ENCODE measurements at regions of chr19 and their contacts with region 1.

Region 1: DNA sequence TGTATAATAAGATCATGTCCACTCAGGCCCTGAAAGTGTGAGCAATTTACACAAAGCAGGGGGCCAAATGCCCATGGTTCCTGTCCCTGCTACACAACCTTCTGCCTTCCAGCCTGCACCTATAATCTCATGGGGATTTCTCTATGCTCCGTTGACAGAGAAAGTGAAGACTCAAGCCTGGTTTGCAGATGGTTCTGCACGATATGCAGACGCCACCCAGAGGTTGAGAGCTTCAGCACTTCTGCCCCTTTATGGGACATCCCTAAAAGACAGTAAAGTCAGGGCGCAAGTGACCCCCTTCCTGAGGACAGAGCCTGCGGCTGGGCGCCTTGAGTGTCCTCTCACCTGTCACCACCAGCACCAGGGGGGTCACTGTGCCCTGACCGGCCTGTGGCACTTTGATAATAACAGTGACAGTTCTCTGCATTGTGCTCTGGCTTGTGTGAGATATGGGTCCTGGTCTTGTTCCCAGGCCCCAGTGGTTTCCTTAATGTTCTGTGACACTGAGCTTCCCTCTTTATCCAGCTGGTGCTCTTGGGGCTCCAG is 15.1 kb downstream of the LILRA5 start:
- DNase-seq: no peak
- ATAC-seq: no peak
- H3K4me3 ChIP-seq: no peak overlapping the region
- H3K27ac ChIP-seq: no peak overlapping the region
- H3K4me1 ChIP-seq: no peaks in the 10 kb centered on the region
- H3K27me3 ChIP-seq: peaks cover 0 to 1% (median 0%) of the 10 kb centered on the region in 3 donors
- CTCF ChIP-seq: no peak

Region 2: DNA sequence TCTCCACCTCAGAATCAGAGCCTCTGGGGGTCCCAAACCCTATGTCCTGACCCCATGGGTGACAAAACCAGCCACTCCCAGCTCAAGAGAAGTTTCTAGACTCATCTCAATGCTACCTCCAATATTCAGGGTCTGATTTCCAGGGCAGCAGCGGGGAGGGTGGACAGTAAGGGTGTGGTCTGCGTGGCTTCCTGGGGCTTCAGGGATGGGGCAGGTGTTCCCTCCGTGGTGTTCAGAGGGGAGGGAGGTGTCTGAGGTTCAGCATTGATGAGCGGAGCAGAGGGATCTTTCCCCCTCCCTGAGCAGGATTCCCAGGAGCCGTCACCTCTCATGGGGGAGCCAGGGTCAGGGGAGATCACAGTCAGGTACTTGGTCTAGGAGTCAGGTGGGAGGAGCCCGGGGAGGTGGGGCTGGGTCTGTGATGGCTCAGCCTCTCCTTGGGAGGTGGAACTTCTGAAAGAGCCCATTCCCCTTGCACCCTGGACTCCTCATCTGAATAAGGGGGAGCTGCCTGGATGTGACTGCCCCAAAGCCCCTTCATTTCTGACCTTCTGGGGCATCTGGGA is 278.7 kb after region 1 on chr19:
- intact Hi-C with region 1: loop called in 1 of 2 experiments (anchors 2 kb)
- DNase-seq: no peak
- ATAC-seq: no peak
- H3K4me3 ChIP-seq: no peak overlapping the region
- H3K27ac ChIP-seq: no peak overlapping the region
- H3K4me1 ChIP-seq: no peaks in the 10 kb centered on the region
- H3K27me3 ChIP-seq: peaks cover 0 to 4% (median 0%) of the 10 kb centered on the region in 3 donors
- CTCF ChIP-seq: no peak

Region 3: GRCh38 chr19:54630782-54631181 is 332.9 kb after region 1 on chr19:
- intact Hi-C with region 1: loop called in 1 of 2 experiments (anchors 2 kb)
- DNase-seq: no peak
- ATAC-seq: no peak
- H3K4me3 ChIP-seq: no peak overlapping the region
- H3K27ac ChIP-seq: no peak overlapping the region
- H3K4me1 ChIP-seq: no peaks in the 10 kb centered on the region
- H3K27me3 ChIP-seq: peaks cover 0 to 2% (median 0%) of the 10 kb centered on the region in 3 donors
- CTCF ChIP-seq: no peak